ENCODE measurements at regions of chr15 and their contacts with region 1.

Region 1: DNA sequence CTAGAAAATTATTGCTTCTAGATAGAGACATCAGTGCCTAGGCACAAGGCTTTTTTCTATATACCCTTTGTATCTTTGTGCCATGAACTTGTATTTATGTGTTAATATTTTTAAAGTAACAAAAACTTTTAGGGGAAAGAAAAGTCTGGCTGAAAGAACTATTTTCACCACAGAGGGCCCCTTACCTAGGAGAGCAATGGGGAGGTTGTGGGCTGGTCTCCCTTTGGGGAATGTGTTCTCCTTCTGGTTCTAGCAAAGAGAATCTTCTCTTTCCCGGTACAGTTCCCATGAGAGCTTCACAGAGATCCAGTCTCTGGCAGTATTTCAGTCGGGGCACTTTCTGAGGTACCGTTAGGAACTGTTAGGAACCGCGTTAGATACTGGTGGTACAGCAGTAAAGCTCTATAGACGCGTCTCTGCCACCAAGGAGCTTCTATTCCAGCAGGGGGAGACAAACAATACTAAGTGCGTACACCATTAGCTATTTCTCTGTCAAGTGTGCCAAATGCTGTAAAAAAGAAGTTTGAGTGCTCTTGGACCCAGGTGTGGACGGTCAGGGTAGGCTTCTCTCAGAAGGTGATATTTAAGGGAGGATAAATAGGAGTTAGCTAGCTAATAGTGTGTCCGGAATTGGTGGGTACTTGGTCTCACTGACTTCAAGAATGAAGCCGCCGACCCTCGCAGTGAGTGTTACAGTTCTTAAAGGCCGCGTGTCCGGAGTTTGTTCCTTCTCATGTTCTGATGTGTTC is 4.6 kb upstream of the EPB42 start:
- DNase-seq: peak in 26 of 35 experiments; percentile 8 to 76 (median 26)
- ATAC-seq: peak; percentile 76 to 86 (median 82)
- H3K4me3 ChIP-seq: no peak overlapping the region
- H3K4me3 Mint-ChIP-seq: peak overlapping the region in 2 of 3 donors; percentile 6 to 32
- H3K27ac ChIP-seq: no peak overlapping the region
- H3K27ac Mint-ChIP-seq: no peak overlapping the region
- H3K4me1 ChIP-seq: peaks cover 0 to 7% of the 10 kb centered on the region in 2 experiments
- H3K4me1 Mint-ChIP-seq: peaks cover 6 to 10% (median 7%) of the 10 kb centered on the region in 3 donors
- H3K27me3 ChIP-seq: peaks cover 0 to 8% of the 10 kb centered on the region in 2 experiments
- H3K27me3 Mint-ChIP-seq: peaks cover 9 to 19% of the 10 kb centered on the region in 2 donors

Region 2: GRCh38 chr15:41577863-41578735 is 1647.3 kb before region 1 on chr15:
- CTCF ChIA-PET with region 1: no interaction called
- POLR2A ChIA-PET with region 1: no interaction called
- DNase-seq: no peak
- ATAC-seq: no peak
- H3K4me3 ChIP-seq: no peak overlapping the region
- H3K4me3 Mint-ChIP-seq: no peak overlapping the region
- H3K27ac ChIP-seq: no peak overlapping the region
- H3K27ac Mint-ChIP-seq: no peak overlapping the region
- H3K4me1 ChIP-seq: no peaks in the 10 kb centered on the region
- H3K4me1 Mint-ChIP-seq: no peaks in the 10 kb centered on the region
- H3K27me3 ChIP-seq: peaks cover 0 to 31% of the 10 kb centered on the region in 2 experiments
- H3K27me3 Mint-ChIP-seq: peaks cover under 1 to 11% of the 10 kb centered on the region in 2 donors

Region 3: DNA sequence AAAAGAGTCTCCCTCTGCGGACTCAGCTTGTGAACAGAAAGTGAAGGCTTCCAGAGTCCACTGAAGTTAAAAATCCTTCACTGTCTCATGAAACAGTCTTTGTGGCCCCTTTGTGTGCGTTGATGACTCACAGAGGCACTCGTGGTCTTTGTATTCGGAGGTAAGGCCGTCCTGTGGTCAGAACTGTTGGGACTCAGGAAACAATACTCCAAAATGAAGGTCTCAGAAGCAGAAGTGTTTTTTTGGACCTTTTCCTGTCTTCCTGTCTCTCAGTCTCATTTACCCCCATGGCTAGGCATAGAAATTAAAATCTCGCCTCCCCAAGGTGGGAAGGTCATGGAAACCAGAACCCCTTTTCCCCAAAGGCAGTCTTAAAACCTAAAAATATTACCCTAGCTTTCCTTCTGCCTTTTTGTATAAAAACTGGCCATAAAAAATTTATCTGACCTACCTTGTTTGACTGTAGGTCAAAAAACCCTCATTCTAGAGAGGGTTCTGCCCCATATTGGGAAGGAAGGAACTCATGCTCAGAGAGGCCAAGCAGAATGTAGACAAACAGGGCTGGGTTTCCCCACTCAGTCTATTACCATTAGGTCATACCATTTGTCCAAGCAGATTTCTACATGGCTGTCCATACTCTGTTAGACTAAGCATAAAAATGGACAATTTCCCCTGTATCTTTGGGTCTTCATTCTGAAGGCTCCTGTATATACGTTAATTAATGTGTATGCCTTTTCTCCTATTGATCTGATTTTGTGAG is 14.5 kb after region 1 on chr15:
- CTCF ChIA-PET with region 1: interaction called in 1 of 2 experiments, 10 read pairs
- POLR2A ChIA-PET with region 1: no interaction called
- DNase-seq: no peak
- ATAC-seq: no peak
- H3K4me3 ChIP-seq: no peak overlapping the region
- H3K4me3 Mint-ChIP-seq: no peak overlapping the region
- H3K27ac ChIP-seq: no peak overlapping the region
- H3K27ac Mint-ChIP-seq: no peak overlapping the region
- H3K4me1 ChIP-seq: no peaks in the 10 kb centered on the region
- H3K4me1 Mint-ChIP-seq: peaks cover 0 to 1% (median 0%) of the 10 kb centered on the region in 3 donors
- H3K27me3 ChIP-seq: peaks cover 0 to 28% of the 10 kb centered on the region in 2 experiments
- H3K27me3 Mint-ChIP-seq: peaks cover 10 to 16% of the 10 kb centered on the region in 2 donors

Region 4: GRCh38 chr15:43285609-43286037 is 60.2 kb after region 1 on chr15:
- CTCF ChIA-PET with region 1: interaction called, 7 to 60 read pairs
- POLR2A ChIA-PET with region 1: no interaction called
- DNase-seq: peak in 30 of 35 experiments; percentile 7 to 80 (median 37)
- ATAC-seq: peak; percentile 63 to 82 (median 68)
- H3K4me3 ChIP-seq: no peak overlapping the region
- H3K4me3 Mint-ChIP-seq: no peak overlapping the region
- H3K27ac ChIP-seq: no peak overlapping the region
- H3K27ac Mint-ChIP-seq: no peak overlapping the region
- H3K4me1 ChIP-seq: peaks cover 0 to 3% of the 10 kb centered on the region in 2 experiments
- H3K4me1 Mint-ChIP-seq: peaks cover 0 to 8% (median 2%) of the 10 kb centered on the region in 3 donors
- H3K27me3 ChIP-seq: peaks cover 0 to 18% of the 10 kb centered on the region in 2 experiments
- H3K27me3 Mint-ChIP-seq: peaks cover 4 to 5% of the 10 kb centered on the region in 2 donors

Measured in T-cell (primary cell).